ENCODE measurements at regions of chr13 and their contacts with region 1.

Region 1: DNA sequence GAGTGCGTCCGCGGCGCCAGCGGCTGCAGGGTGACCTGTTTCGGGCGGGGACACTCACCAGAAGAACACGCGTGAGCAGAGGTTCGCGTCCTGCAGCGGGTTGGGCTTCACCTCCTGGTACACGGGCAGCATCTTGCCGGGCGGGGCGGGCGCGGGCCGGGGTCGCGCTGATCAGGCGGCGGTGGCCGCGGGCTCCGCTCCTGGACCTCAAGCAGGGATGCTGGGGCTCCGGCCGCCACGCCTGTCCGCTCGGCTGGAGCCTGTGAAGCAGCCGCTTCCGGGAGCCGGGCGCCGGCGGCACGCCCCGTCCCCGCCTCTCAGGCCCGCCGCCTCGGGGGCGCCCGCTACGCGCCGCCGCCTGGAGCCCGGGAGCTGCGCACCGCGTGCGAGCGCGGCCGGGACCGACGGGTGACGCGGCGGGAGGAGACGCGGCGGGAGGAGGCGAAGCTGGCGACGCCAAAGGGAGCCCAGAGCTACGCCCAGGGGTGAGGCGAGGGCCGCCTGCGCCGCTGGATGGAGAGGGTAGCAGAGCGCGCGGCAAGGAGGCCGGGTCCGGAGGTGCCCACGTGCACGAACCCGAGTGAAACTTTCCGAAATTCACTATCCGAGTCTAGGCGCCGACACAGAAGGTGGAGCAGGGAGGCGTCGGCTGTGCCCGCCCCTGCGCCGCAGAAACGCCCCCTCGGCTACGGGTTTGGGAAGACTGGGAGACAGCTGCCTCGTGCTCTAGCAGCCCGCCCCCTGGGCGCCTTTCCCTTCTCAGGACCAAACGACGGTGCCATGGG is at the start of gene ABCC4:
- DNase-seq: no peak
- H3K4me3 ChIP-seq: peak within 1 kb of the TSS; percentile 81
- CTCF ChIP-seq: peak; percentile 6

Region 2: DNA sequence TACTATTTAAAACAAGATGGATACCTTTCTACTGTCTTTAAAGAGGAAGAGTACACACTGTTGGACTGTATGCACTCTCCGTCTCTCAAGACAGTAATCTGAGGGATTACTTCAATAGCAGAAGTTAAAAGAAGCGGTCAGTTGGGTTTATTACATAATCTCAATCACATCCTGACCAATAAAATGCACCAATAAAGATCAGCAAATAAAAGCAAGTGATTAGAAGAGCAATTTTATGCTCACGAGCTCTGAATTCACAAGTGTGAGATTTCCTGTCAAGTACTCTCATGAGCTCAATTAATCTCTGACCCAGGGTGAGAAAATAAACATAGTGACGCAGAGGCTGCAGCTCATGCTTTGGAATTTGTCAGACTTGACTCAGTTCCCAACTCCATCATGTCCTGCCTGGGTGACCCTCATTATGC is 12.3 kb before region 1 on chr13:
- CTCF ChIA-PET with region 1: interaction called, 16 read pairs
- POLR2A ChIA-PET with region 1: no interaction called
- DNase-seq: no peak
- H3K4me3 ChIP-seq: no peak overlapping the region
- CTCF ChIP-seq: no peak